Uterus (tissue), 4 donors: ENCODE measurements at regions of chr11 and their contacts with region 1.

Region 1: GRCh38 chr11:130131961-130132850 is 27.4 kb upstream of the ST14 start:
- DNase-seq: peak; percentile 41 to 59
- H3K4me3 ChIP-seq: no peak overlapping the region
- H3K27ac ChIP-seq: no peak overlapping the region
- H3K4me1 ChIP-seq: no peaks in the 10 kb centered on the region
- H3K27me3 ChIP-seq: no peaks in the 10 kb centered on the region
- CTCF ChIP-seq: peak; percentile 77 to 89 (median 84)
- POLR2A ChIP-seq: no peak

Region 2: DNA sequence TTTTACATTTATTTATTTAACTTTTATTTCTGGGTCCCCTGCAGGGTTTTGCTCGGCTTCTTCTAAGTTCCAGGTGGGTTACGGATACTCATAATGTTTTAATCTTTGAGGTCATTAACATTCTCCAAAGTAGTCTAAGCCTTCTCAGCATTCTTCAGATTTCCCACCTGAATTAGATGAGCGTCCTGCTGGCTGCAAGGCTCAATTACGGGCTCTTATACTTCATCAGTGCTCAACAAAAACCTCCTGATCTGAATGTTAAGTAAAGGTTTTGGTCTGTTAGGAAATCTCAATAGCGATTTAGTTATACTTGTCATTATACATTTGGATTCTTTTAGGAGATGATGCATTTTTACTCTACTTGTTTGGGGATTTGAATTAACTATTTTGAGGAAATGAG is 209.5 kb before region 1 on chr11:
- intact Hi-C with region 1: loop called (anchors 5 kb)
- DNase-seq: no peak
- H3K4me3 ChIP-seq: no peak overlapping the region
- H3K27ac ChIP-seq: no peak overlapping the region
- H3K4me1 ChIP-seq: no peaks in the 10 kb centered on the region
- H3K27me3 ChIP-seq: no peaks in the 10 kb centered on the region
- CTCF ChIP-seq: no peak
- POLR2A ChIP-seq: no peak